Vagina (tissue), 2 donors: ENCODE measurements at regions of chr3 and their contacts with region 1.

Region 1: DNA sequence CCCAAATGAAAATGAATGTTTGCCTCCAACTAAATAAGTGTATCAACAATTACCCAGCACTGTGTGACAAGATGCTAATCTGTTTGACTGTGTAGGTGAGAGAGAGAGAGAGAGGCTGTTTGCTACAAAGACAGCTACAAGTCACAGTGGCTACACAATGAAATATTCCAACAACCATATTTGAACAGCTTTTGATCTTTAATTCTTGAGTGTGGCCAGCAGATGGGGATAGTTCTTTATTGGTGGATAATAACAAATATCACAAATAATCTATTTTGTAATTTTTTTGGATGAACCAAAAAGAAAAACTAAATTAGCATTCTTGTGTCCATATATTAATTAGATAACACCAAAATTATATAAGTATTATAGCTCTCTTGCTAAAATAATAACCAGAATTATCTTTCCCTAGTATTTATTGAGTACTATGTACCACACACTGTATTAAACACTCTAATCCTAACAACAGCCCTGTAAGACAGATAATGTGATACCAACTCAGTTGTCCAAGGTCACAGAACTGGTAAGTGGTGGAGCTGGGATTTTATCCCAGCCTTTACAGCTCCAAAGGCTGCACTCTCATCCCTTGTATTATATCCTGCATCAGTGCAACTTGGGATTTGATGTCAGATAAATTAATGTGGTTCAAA is 61.9 kb upstream of the C3orf80 start:
- DNase-seq: no peak
- H3K4me3 ChIP-seq: no peak overlapping the region
- H3K27ac ChIP-seq: no peak overlapping the region
- H3K4me1 ChIP-seq: no peaks in the 10 kb centered on the region
- H3K27me3 ChIP-seq: no peaks in the 10 kb centered on the region
- CTCF ChIP-seq: peak in 1 of 3 experiments; percentile 36
- POLR2A ChIP-seq: no peak

Region 2: GRCh38 chr3:160106905-160107861 is 56.2 kb before region 1 on chr3:
- intact Hi-C with region 1: no loop called
- DNase-seq: no peak
- H3K4me3 ChIP-seq: no peak overlapping the region
- H3K27ac ChIP-seq: no peak overlapping the region
- H3K4me1 ChIP-seq: no peaks in the 10 kb centered on the region
- H3K27me3 ChIP-seq: no peaks in the 10 kb centered on the region
- CTCF ChIP-seq: no peak
- POLR2A ChIP-seq: no peak

Region 3: DNA sequence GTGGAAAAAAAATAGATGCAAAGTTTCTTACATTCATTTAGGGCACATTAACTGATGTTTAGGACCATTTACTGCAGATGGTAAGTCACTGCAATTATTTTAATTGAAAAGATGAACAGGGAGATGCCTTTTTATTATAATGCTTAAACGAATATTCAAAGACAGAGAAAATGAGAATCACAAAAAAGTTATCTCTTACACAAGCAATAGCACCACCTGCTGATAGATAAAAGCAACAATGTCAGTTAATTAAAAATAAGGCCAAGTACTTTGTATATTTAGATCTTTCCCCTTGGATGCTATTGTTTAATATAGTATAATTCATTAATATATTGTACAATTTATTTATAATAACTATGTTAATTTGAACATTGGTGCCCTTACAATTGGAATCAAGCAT is 179.8 kb after region 1 on chr3:
- intact Hi-C with region 1: loop called (anchors 10 kb)
- DNase-seq: no peak
- H3K4me3 ChIP-seq: no peak overlapping the region
- H3K27ac ChIP-seq: no peak overlapping the region
- H3K4me1 ChIP-seq: no peaks in the 10 kb centered on the region
- H3K27me3 ChIP-seq: no peaks in the 10 kb centered on the region
- CTCF ChIP-seq: peak in 1 of 3 experiments; percentile 26
- POLR2A ChIP-seq: no peak